Activated CD4-positive, alpha-beta T cell treated with anti-CD3 and anti-CD28 coated beads, Interleukin-2, amount 10 ng/mL, durations not matched to agents 7 days and 5 days (primary cell): ENCODE measurements at regions of chr2 and their contacts with region 1.

Region 1: DNA sequence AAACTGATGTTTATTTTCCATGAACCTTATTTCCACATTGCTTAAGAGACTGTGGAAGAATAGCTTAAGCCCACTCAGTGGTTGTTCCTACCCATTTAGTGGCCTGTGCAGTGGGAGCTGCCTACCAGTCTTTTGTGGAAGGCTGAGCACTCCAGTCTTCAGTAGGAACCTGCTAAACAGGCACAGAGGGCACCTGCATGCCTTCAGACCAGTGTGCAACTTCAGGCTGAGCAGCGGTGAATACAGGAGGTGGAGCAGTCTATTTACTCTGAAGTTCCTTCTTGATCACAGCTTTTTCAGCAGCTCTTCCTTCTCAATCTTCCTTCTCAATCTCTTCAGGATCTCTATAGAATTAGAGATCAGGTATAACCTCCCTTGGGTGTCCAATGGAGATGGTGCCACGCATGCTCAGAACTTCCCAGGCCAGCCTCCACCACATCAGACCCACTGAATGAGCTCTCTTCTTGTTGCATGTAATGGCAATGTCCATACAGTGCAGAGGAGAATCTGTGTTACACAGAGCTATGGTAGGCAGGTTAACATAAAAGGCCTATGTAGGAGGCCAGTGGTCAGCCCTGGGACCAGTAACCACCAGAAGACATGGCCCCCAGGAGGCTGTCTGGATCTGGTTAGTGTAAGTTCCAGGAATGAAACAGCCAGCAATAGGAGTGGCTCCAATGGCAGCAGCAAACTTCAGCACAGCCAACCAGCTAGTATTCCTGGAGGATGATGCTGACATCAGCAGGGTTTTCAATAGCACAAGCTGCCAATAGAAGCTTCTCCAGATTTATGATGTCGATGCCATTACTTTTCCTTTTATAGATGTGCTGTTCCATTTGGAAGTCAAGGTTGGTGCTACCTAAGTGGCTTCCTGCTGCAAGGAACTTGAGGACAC is 47.9 kb upstream of the MAT2A start:
- DNase-seq: no peak
- H3K4me3 Mint-ChIP-seq: no peak overlapping the region
- H3K27ac Mint-ChIP-seq: peak overlapping the region; percentile 13
- H3K4me1 Mint-ChIP-seq: no peaks in the 10 kb centered on the region
- H3K27me3 Mint-ChIP-seq: no peaks in the 10 kb centered on the region

Region 2: DNA sequence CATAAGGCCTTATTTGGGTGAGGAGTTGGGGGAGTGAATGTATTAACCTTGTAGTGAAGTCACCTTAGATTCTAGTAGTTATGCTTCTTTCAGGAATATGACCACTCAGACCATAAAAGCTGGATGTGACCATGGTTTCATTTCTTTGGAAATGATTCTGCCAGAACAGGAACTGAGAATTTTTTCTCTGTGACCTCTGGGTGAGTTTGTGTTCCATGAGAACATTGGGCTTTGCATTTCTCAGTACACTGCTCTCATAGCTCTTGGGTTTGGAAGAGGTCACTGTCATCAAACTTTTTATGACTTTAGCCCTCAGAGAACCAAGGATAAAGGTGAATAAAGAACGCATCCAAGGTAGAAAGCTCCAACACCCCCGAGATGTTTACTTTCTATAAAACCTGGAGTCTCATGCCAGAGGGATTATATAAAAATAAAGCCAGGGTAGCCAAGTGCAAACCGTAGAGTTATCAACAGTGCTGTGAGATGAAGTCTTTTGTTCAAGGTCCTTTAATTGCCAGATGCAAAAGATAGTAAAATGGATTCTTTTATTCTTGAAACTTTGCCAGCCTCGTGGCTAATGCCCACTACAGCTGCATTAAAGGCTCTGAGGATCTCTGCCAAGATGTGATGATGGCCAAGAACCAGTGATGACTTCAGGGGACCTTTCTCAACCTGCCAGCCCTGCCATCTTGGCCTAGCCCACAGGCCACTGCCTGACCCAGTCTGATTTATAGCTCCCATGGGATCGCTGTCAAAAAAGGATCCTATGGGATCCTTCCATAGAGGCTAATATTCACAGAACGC is 20.1 kb after region 1 on chr2:
- CTCF ChIA-PET with region 1: interaction called, 3 read pairs
- POLR2A ChIA-PET with region 1: interaction called, 10 read pairs
- DNase-seq: no peak
- H3K4me3 Mint-ChIP-seq: no peak overlapping the region
- H3K27ac Mint-ChIP-seq: no peak overlapping the region
- H3K4me1 Mint-ChIP-seq: no peaks in the 10 kb centered on the region
- H3K27me3 Mint-ChIP-seq: no peaks in the 10 kb centered on the region

Region 3: DNA sequence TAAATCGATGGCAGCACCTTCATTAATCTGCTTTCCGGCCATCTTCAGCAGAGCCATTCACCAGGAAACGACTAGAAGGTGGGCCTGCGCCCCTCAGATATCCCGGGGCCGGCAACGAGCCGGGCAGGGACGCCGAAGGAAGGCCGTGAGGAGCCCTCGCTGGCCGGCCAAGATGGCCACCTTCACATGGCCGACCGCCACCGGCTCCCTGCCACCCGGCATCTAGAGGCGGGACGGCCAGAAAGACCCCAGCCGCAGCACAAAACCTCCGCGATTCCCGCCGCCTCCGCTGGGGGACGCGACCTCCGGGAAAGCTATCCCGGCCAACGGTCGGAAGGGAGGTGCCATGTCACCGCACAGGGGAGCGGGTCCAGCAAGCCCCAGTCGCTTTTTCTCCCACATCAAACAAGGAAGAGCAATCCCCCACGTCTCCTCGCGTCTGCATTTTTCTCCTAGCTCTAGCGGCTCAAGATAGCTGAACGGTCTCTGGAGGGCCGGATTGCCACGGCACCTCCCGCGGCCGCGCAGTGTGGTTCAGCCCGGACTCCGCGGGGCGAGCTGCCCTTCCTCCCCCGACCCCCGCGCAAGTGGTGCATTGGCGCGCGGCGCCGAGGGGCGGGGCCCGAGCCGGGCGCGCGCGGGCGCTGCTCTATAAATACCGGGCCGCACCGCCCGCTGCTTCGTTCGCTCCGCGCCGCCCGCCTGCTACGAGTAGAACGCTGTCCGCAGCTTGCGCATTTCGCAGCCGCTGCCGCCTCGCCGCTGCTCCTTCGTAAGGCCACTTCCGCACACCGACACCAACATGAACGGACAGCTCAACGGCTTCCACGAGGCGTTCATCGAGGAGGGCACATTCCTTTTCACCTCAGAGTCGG is 47.6 kb after region 1 on chr2 and contains the start of gene MAT2A:
- CTCF ChIA-PET with region 1: no interaction called
- POLR2A ChIA-PET with region 1: no interaction called
- DNase-seq: peak; percentile 84
- H3K4me3 Mint-ChIP-seq: peak within 1 kb of the TSS; percentile 97
- H3K27ac Mint-ChIP-seq: peak within 1 kb of the TSS; percentile 96
- H3K4me1 Mint-ChIP-seq: peaks cover 50% of the 10 kb centered on the region
- H3K27me3 Mint-ChIP-seq: no peaks in the 10 kb centered on the region
- total RNA-seq, gene MAT2A: 263 to 269 TPM